ENCODE measurements at regions of chr2 and their contacts with region 1.

Region 1: GRCh38 chr2:11583840-11584524 is 50.1 kb downstream of the GREB1 start:
- DNase-seq: peak; percentile 82
- H3K4me3 ChIP-seq: no peak overlapping the region
- H3K27me3 ChIP-seq: peaks cover 15% of the 10 kb centered on the region
- CTCF ChIP-seq: peak; percentile 87

Region 2: GRCh38 chr2:11477994-11478393 is 106.0 kb before region 1 on chr2:
- CTCF ChIA-PET with region 1: interaction called, 195 read pairs
- POLR2A ChIA-PET with region 1: no interaction called
- DNase-seq: peak; percentile 16
- H3K4me3 ChIP-seq: no peak overlapping the region
- H3K27me3 ChIP-seq: peaks cover 25% of the 10 kb centered on the region
- CTCF ChIP-seq: peak; percentile 85

Region 3: GRCh38 chr2:11534744-11535484 is 49.1 kb before region 1 on chr2:
- CTCF ChIA-PET with region 1: interaction called, 13 read pairs
- POLR2A ChIA-PET with region 1: no interaction called
- DNase-seq: no peak
- H3K4me3 ChIP-seq: no peak overlapping the region
- H3K27me3 ChIP-seq: peaks cover 8% of the 10 kb centered on the region
- CTCF ChIP-seq: no peak

Region 4: DNA sequence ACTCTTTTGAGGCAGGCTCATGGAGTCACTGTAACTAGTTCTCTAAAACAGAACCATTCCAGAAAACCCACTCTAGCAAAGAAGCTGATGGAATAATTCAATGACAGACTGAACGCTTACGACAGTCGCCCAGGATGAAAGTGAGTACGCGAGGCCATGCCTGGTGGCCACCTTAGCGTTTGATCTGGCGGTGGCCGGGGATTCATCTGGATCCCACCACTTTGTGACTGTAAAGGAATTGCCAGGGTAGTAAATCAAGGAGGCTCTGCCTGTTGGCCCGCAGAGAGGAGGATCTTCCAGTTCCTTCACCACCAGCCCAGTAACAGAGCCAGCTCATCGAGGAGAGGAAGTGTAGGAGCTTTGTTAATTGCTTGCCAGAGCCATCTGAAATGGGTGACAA is 15.5 kb before region 1 on chr2:
- CTCF ChIA-PET with region 1: interaction called, 36 read pairs
- POLR2A ChIA-PET with region 1: no interaction called
- DNase-seq: no peak
- H3K4me3 ChIP-seq: no peak overlapping the region
- H3K27me3 ChIP-seq: peaks cover 8% of the 10 kb centered on the region
- CTCF ChIP-seq: no peak

Region 5: DNA sequence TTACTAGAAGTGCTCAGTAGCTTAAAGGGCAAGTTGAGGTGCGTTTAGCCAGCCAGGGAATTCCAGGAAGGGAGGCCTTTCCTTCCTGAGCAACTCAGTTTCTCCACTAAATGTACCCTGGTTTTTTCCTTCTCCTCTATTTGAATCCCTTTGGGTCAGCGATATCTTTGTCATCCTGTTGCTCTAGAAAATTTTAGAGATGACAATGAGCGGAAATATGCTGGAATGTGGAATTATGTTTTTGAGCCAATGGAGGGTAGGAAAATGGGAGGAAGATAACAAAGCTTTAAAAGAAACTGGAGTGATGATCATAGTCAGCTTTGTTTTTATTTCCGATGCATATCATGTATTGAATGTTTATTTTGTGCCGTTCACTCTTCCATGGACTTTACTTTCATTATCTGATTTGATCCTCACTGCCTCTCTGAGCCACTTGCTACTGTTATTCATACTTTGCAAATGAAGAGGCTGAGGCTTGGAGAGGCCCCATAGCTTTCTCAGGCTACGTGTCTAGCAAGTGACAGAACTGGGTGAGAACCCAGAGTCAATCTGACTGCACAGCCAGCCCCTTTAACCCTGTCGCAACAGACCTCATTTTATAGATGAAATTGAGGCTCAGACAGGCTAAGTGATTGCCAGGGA is 18.7 kb after region 1 on chr2:
- CTCF ChIA-PET with region 1: interaction called, 28 read pairs
- POLR2A ChIA-PET with region 1: no interaction called
- DNase-seq: no peak
- H3K4me3 ChIP-seq: no peak overlapping the region
- H3K27me3 ChIP-seq: peaks cover 7% of the 10 kb centered on the region; the same call in 1 of the 2 replicates
- CTCF ChIP-seq: no peak

Region 6: GRCh38 chr2:12177455-12178288 is 593.7 kb after region 1 on chr2:
- CTCF ChIA-PET with region 1: no interaction called
- POLR2A ChIA-PET with region 1: no interaction called
- DNase-seq: peak; percentile 48
- H3K4me3 ChIP-seq: no peak overlapping the region
- H3K27me3 ChIP-seq: peaks cover 3% of the 10 kb centered on the region
- CTCF ChIP-seq: no peak